ENCODE measurements at regions of chr3 and their contacts with region 1.

Region 1: GRCh38 chr3:119676771-119677640 is at the start of gene COX17:
- DNase-seq: peak; percentile 98 to 99
- H3K4me3 ChIP-seq: peak within 1 kb of the TSS in 2 of 3 donors; percentile 56 to 60
- H3K27ac ChIP-seq: peak within 1 kb of the TSS; percentile 84 to 93 (median 90)
- H3K4me1 ChIP-seq: peaks cover 11 to 18% of the 10 kb centered on the region in 2 donors
- H3K27me3 ChIP-seq: no peaks in the 10 kb centered on the region
- CTCF ChIP-seq: no peak
- POLR2A ChIP-seq: peak in 1 of 2 donors; percentile 66
- total RNA-seq, gene COX17: 12.8 to 73.0 (median 46.0) TPM

Region 2: DNA sequence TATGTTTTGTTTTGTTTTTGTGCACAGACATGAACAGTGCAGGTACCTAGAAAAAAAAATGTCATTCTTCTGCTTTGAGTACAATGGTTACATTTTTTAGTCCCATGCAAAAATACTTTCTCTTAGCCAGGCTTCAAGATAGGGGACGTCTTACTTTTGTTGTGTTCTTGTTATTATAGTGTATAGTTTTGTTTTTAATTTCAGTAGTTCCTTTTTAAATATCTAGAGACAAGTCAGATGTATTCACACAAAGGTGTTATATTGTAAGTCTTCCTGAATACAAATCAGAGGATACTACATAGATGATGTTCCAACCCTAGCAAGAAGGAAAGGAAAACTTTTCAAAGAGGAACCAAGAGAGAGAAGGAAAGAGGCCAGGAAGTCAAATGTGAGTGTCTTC is 613.5 kb before region 1 on chr3:
- intact Hi-C with region 1: no loop called
- DNase-seq: no peak
- H3K4me3 ChIP-seq: no peak overlapping the region
- H3K27ac ChIP-seq: no peak overlapping the region
- H3K4me1 ChIP-seq: no peaks in the 10 kb centered on the region
- H3K27me3 ChIP-seq: no peaks in the 10 kb centered on the region
- CTCF ChIP-seq: no peak
- POLR2A ChIP-seq: no peak

Region 3: GRCh38 chr3:119498186-119498987 is 178.6 kb before region 1 on chr3 and contains the start of gene TIMMDC1:
- intact Hi-C with region 1: loop called (anchors 10 kb)
- DNase-seq: peak; percentile 98
- H3K4me3 ChIP-seq: peak within 1 kb of the TSS; percentile 31 to 67 (median 45)
- H3K27ac ChIP-seq: peak within 1 kb of the TSS; percentile 81 to 93 (median 85)
- H3K4me1 ChIP-seq: peaks cover 21 to 25% of the 10 kb centered on the region in 2 donors
- H3K27me3 ChIP-seq: no peaks in the 10 kb centered on the region
- CTCF ChIP-seq: no peak
- POLR2A ChIP-seq: peak in 1 of 2 donors; percentile 87
- total RNA-seq, gene TIMMDC1: 34.2 to 78.5 (median 48.6) TPM

Region 4: GRCh38 chr3:119562307-119562961 is 114.6 kb before region 1 on chr3:
- intact Hi-C with region 1: no loop called
- DNase-seq: no peak
- H3K4me3 ChIP-seq: no peak overlapping the region
- H3K27ac ChIP-seq: no peak overlapping the region
- H3K4me1 ChIP-seq: no peaks in the 10 kb centered on the region
- H3K27me3 ChIP-seq: no peaks in the 10 kb centered on the region
- CTCF ChIP-seq: no peak
- POLR2A ChIP-seq: no peak

Region 5: DNA sequence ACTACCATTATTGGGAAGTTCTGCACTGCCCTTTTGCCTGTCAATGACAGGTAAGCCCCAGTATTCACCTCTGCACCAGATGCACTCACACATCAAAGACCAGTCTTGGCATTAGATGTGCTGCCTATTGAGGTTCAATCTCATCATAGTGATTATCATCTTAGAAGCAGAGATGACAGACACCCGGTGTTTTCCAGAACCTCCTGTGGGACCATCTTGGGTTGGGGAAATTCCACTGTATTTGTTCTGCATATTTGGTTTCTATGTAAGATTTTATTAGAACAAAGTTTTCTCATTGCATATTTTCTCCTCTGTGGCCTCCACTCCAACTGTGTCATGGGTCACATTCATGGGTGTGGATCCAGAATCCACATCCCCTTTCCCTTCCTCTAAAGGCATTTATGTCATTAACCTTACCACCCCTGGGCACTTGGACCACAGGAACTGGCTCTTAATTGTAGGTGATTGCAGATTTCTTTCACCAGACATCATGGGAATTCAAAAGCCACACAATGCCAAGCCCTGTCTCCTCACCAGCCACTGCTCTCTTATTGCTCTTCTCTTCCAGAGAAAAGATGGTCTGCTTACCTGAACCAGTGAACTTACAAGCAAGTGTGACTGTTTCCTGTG is 48.1 kb before region 1 on chr3:
- intact Hi-C with region 1: no loop called
- DNase-seq: no peak
- H3K4me3 ChIP-seq: no peak overlapping the region
- H3K27ac ChIP-seq: no peak overlapping the region
- H3K4me1 ChIP-seq: peaks cover 0 to 11% of the 10 kb centered on the region in 2 donors
- H3K27me3 ChIP-seq: no peaks in the 10 kb centered on the region
- CTCF ChIP-seq: no peak
- POLR2A ChIP-seq: no peak

Region 6: GRCh38 chr3:119741657-119742590 is 64.9 kb after region 1 on chr3:
- intact Hi-C with region 1: no loop called
- DNase-seq: no peak
- H3K4me3 ChIP-seq: no peak overlapping the region
- H3K27ac ChIP-seq: no peak overlapping the region
- H3K4me1 ChIP-seq: no peaks in the 10 kb centered on the region
- H3K27me3 ChIP-seq: no peaks in the 10 kb centered on the region
- CTCF ChIP-seq: no peak
- POLR2A ChIP-seq: no peak